ENCODE measurements at regions of chr14 and their contacts with region 1.

Region 1: GRCh38 chr14:50860478-50861086 is 11.3 kb upstream of the ABHD12B start:
- DNase-seq: peak; percentile 81
- CTCF ChIP-seq: peak; percentile 76

Region 2: DNA sequence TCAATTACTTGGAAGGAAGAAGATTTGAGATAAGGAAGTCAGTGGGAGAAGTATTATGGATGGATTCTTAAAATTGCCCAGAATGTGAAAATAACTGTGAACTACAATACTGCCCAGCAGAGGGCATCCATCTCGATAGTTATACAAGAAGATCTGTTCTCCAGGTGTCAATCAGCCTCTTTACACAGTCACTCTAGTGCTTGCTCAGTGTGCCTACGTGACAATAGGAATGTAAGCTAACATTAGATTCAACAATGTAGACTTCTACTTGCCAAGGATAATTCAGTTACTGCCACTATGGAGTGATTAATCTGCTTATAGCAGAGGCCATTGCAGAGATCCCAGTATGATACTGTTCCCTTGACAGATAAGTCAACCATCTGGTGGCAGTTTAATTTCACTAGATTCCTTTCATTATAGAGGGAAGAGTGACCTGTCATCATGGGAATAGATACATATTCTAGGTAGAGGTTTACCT is 317.6 kb before region 1 on chr14:
- CTCF ChIA-PET with region 1: interaction called, 11 read pairs
- POLR2A ChIA-PET with region 1: no interaction called
- DNase-seq: peak; percentile 63
- CTCF ChIP-seq: peak; percentile 45

Region 3: DNA sequence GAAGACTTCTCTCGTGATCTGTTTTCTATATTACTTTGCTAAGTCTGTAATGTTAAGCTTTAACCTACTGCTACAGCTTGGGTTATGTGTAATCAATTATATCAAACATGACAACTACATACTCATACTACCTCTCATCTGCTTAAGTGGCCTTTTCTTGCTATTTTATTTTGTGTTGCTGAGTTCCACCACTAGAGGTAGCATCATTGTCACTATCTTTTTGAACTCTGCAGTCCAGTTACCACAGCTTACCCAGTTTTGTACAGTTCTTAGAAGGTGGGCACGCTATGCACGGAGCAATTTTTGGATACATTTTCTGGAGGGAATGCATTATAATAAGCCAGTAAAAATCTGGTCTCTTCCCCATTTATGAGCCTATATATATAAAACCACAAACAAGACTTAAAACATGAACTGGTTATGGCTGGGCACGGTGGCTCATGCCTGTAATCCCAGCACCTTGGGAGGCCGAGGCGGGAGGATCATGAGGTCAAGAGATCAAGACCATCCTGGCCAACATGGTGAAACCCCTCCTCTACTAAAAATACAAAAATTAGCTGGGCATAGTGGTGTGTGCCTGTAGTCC is 240.9 kb before region 1 on chr14:
- CTCF ChIA-PET with region 1: interaction called, 10 read pairs
- POLR2A ChIA-PET with region 1: no interaction called
- DNase-seq: peak; percentile 39
- CTCF ChIP-seq: peak; percentile 57

Region 4: GRCh38 chr14:50677527-50678063 is 183.0 kb before region 1 on chr14:
- CTCF ChIA-PET with region 1: no interaction called
- POLR2A ChIA-PET with region 1: no interaction called
- DNase-seq: peak; percentile 29
- CTCF ChIP-seq: no peak

Region 5: GRCh38 chr14:50773632-50774541 is 86.7 kb before region 1 on chr14:
- CTCF ChIA-PET with region 1: interaction called, 38 read pairs
- POLR2A ChIA-PET with region 1: no interaction called
- DNase-seq: no peak
- CTCF ChIP-seq: peak; percentile 77

Region 6: DNA sequence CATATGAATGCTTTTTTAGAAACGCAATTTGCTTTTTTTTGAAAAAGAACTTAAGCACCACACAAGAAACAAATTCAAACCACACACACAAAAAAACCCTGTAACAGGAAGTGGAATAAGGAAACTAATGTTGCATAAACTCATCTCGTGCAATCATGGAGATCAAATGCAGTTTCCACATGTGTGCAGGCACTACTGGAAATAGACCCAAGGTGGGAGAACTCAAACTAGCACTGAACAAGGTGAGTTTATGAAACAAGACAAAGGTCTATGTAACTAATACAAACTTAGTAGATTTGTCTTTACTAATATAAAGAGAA is 47.1 kb before region 1 on chr14:
- CTCF ChIA-PET with region 1: interaction called, 14 read pairs
- POLR2A ChIA-PET with region 1: no interaction called
- DNase-seq: no peak
- CTCF ChIP-seq: no peak

Region 7: DNA sequence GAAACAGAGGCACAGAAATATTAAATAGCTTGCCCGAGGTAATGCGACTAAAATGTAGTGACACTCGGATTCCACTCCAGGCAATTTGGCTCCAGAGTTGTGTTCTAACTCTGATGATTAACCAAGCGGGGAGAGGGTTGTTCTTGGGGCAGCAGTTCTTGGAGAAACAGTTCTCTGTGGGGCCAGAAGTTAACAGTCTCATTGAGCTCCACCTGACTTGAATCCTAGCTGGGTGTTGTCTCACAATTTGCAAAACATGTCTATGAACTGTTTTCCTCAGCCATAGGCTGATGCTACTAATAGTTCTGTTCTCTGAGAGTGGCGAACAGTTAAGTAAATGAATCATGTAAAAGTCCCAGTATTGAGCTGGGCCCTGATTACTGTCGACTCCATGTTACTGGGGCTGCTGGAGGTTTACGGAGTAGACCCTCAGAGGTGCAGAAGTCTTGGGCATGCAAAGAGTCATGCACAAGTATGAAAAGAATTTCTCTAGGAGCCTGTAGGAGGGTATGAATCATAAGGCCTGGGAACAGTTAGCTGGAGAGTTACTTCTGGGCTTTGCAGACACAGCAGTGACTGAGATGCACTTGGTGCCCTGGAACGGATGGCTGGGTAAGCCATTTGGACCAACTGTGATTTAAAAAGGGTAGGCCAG is 14.2 kb before region 1 on chr14:
- CTCF ChIA-PET with region 1: interaction called, 103 read pairs
- POLR2A ChIA-PET with region 1: no interaction called
- DNase-seq: no peak
- CTCF ChIP-seq: no peak